ENCODE measurements at regions of chr3 and their contacts with region 1.

Region 1: DNA sequence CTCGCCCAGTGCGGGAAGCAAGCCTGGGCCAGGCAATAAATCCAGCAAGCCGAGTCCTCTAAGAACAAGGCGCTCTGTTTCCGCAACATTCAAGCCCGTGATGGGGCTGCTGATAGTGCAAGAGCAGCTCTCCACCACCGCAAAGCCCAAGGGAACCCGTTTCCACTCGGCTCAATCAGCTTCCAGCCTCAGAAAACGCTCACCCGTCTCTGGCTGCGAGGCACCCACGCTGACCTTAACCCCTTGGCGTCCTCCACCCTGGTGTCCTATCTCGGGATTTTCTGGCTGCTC is 17.8 kb downstream of the SPATA12 start:
- DNase-seq: peak; percentile 58 to 59
- H3K4me3 ChIP-seq: peak overlapping the region; percentile 49 to 51
- H3K27ac ChIP-seq: peak overlapping the region; percentile 20 to 63
- H3K4me1 ChIP-seq: no peaks in the 10 kb centered on the region
- H3K27me3 ChIP-seq: no peaks in the 10 kb centered on the region
- CTCF ChIP-seq: no peak
- POLR2A ChIP-seq: no peak

Region 2: GRCh38 chr3:56997675-56998074 is 80.6 kb before region 1 on chr3:
- intact Hi-C with region 1: loop called (anchors 10 kb)
- DNase-seq: no peak
- H3K4me3 ChIP-seq: no peak overlapping the region
- H3K27ac ChIP-seq: peak overlapping the region; percentile 56 to 67
- H3K4me1 ChIP-seq: peaks cover 6 to 12% of the 10 kb centered on the region in 2 donors
- H3K27me3 ChIP-seq: no peaks in the 10 kb centered on the region
- CTCF ChIP-seq: no peak
- POLR2A ChIP-seq: no peak

Measured in uterus (tissue), 4 donors.